ENCODE measurements at regions of chr12 and their contacts with region 1.

Region 1: DNA sequence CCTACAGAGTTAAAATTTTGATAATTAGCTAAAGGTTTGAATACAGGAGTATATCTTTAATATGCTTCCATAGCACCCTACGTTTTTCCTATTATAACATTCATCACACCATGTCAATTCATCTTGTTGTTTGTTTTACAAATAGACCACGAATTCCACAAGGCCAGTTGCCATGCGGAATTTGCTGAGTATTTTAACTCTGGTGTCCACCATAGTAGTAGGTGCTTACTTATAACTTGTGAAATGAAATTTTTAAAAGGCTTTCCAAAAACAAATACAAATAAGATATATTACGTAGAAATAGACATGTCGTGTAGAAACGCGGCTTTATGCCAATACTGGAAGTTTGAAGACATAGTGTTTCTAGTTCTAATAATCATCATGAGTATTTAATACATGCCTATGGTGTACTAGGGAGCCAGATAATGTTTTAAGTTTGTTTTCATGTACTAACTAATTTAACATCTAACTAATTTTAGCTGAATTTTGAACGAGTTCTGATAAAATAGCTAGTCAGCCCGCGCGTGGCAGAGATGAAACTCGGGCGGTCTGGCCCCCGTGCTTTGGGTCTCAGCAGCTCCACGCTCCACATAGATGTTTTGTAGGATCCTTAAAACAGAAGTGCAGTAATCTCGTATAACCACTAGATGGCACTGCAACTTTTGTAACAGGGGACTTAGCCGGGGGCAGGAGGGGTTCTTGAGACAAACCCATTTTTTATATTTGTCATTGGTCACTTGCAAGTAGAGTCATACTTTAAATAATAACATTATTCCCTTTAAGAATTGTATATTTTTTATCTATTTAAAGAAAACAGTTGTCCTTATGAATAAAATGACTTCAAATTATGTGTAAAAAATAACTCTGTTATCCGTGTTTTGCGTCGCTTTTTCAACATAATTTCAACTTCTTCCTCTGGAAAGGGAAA is 10.2 kb downstream of the CD69 start:
- DNase-seq: no peak
- H3K4me3 ChIP-seq: peak overlapping the region in 1 of 4 experiments; percentile 47; a peak in 2 of 8 replicates
- H3K27ac ChIP-seq: no peak overlapping the region
- H3K4me1 ChIP-seq: peaks cover 0 to 4% (median 0%) of the 10 kb centered on the region in 4 experiments; a peak in 1 of 7 replicates
- H3K27me3 ChIP-seq: no peaks in the 10 kb centered on the region
- CTCF ChIP-seq: peak in 2 of 3 experiments; percentile 64 to 88; a peak in 3 of 4 replicates
- EP300 ChIP-seq: no peak
- POLR2A ChIP-seq: no peak
- RAD21 ChIP-seq: peak; percentile 90 to 93

Region 2: DNA sequence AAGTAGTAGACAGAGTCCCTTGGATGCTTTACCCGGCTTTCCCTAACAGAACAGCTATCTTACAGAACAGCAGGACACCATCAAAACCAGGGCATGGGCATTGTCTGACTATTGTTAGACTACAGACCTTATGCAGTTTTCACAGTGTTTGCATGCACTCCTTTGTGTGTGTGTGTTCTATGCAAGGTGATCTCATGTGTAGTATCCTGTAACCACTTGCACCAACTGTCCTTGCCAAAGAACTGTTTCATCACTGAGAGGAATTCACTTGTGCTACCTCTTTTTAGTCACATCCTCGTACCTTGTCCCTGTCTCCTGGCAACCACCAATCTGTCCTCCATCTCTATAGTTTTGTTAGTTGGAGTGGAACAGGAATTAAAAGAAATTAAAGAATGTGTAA is 358.7 kb before region 1 on chr12:
- CTCF ChIA-PET with region 1: no interaction called
- POLR2A ChIA-PET with region 1: no interaction called
- DNase-seq: no peak
- H3K4me3 ChIP-seq: no peak overlapping the region
- H3K27ac ChIP-seq: no peak overlapping the region
- H3K4me1 ChIP-seq: peaks cover 0 to 7% (median 3%) of the 10 kb centered on the region in 4 experiments; a peak in 3 of 7 replicates
- H3K27me3 ChIP-seq: no peaks in the 10 kb centered on the region
- CTCF ChIP-seq: no peak
- EP300 ChIP-seq: no peak
- POLR2A ChIP-seq: no peak
- RAD21 ChIP-seq: no peak

Region 3: DNA sequence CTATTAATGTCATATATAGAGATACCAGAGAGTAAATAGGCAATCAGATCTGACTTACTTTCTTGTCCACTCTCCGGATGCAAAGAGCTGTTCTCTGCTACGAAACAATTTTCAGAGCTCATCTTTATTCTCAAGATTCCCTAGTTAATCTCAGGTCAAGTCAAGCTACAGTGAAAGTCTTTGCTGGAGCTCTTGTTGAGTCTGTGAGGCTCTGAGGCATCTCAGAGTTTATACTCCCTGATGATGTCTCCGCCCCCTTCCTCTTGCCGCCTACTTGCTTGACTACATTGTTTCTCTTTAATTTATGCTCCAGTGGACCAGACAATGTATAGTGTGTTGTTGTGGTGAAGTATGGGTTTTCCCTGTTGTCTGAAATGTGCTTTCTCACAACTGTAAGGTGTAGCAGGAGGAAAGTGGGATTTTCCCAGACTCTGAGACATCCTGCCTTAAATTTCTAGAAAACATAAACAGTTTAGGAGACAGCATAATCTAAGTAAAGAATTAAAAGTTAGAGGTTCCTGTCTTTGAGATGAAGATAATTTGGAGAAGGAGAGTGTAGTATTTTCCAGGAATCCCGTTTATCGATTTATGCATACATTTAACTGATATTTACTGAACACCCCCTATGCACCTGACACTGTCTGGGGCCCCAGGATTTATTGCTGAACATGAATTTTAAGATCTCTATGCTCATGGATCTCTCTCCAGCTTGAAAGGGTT is 10.3 kb after region 1 on chr12 and contains the start of gene CD69:
- CTCF ChIA-PET with region 1: interaction called, 21 read pairs
- POLR2A ChIA-PET with region 1: no interaction called
- DNase-seq: no peak
- H3K4me3 ChIP-seq: no peak within 1 kb of the TSS
- H3K27ac ChIP-seq: no peak within 1 kb of the TSS
- H3K4me1 ChIP-seq: peaks cover 0 to 4% (median 0%) of the 10 kb centered on the region in 4 experiments; a peak in 1 of 7 replicates
- H3K27me3 ChIP-seq: no peaks in the 10 kb centered on the region
- CTCF ChIP-seq: no peak
- EP300 ChIP-seq: no peak
- POLR2A ChIP-seq: no peak
- RAD21 ChIP-seq: no peak
- total RNA-seq, gene CD69: not detected in 2 replicates

Region 4: GRCh38 chr12:9782547-9783382 is 32.2 kb after region 1 on chr12:
- CTCF ChIA-PET with region 1: interaction called, 12 read pairs
- POLR2A ChIA-PET with region 1: no interaction called
- DNase-seq: no peak
- H3K4me3 ChIP-seq: no peak overlapping the region
- H3K27ac ChIP-seq: no peak overlapping the region
- H3K4me1 ChIP-seq: peaks cover 0 to 13% (median 2%) of the 10 kb centered on the region in 4 experiments; a peak in 3 of 7 replicates
- H3K27me3 ChIP-seq: no peaks in the 10 kb centered on the region
- CTCF ChIP-seq: no peak
- EP300 ChIP-seq: no peak
- POLR2A ChIP-seq: no peak
- RAD21 ChIP-seq: no peak

Region 5: DNA sequence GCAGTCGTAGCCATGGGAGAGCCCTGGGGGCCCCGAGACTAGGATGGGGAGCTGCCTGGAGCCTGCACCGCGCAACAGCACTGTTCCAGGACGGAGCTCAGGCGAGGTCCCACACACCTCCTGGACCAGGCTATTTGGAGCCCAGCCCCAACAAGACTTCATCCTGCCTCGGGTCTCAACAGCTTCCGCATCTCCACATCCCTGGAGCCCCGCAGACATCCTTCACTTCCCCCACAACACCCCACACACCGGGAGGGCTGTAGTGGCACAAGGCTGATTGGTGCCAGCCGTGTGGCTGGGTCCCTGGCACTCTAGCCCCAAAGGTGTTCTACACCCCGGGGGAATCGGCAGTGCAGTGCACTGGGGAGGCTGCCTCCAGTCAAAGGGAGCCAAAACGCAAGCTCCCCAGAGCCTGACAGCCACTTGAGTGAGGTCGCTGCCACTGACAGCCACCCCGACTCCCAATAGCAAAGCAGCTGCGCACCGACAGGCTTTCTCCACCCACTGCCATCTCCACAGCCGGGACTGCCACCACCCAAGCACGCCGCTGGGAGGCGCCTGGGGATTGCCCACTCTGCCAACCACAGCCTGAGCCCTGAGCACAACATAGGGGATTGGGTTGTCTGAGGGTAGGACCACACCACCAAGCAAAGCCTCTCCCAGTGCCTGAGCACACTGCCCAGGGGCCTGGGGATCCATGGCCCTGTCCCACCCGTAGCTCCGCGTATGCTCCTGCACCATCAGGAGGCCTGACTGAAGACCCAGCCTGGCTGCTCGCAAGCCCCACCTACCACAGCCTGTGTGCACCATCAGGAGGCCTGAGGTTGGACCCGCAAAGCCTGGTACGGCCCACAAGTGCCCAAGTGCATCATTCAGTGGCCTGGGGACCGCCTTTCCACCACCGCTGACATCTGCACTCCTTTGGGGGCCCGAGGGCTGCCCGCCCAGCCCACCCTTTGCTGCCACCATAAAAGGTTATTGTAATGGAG is 63.6 kb after region 1 on chr12:
- CTCF ChIA-PET with region 1: interaction called, 108 read pairs
- POLR2A ChIA-PET with region 1: no interaction called
- DNase-seq: peak; percentile 70 to 98
- H3K4me3 ChIP-seq: peak overlapping the region in 3 of 4 experiments; percentile 22 to 50 (median 34); a peak in 3 of 8 replicates
- H3K27ac ChIP-seq: no peak overlapping the region
- H3K4me1 ChIP-seq: no peaks in the 10 kb centered on the region
- H3K27me3 ChIP-seq: no peaks in the 10 kb centered on the region
- CTCF ChIP-seq: peak; percentile 94 to 98 (median 95)
- EP300 ChIP-seq: no peak
- POLR2A ChIP-seq: no peak
- RAD21 ChIP-seq: peak; percentile 97

Region 6: GRCh38 chr12:10140001-10140400 is 389.5 kb after region 1 on chr12:
- CTCF ChIA-PET with region 1: interaction called, 32 read pairs
- POLR2A ChIA-PET with region 1: no interaction called
- DNase-seq: peak in 1 of 2 experiments; percentile 29
- H3K4me3 ChIP-seq: no peak overlapping the region
- H3K27ac ChIP-seq: no peak overlapping the region
- H3K4me1 ChIP-seq: no peaks in the 10 kb centered on the region
- H3K27me3 ChIP-seq: no peaks in the 10 kb centered on the region
- CTCF ChIP-seq: peak in 2 of 3 experiments; percentile 56 to 80; a peak in 3 of 4 replicates
- EP300 ChIP-seq: no peak
- POLR2A ChIP-seq: no peak
- RAD21 ChIP-seq: peak; percentile 95 to 97